Activated naive CD4-positive, alpha-beta T cell treated with anti-CD3 and anti-CD28 coated beads for 36 hours (primary cell): ENCODE measurements at regions of chr10 and their contacts with region 1.

Region 1: GRCh38 chr10:92699518-92700381 is 10.0 kb downstream of the HHEX start:
- DNase-seq: peak; percentile 62
- H3K4me3 Mint-ChIP-seq: peak overlapping the region; percentile 78
- H3K27ac Mint-ChIP-seq: no peak overlapping the region
- H3K4me1 Mint-ChIP-seq: peaks cover 16% of the 10 kb centered on the region
- H3K27me3 Mint-ChIP-seq: peaks cover 64% of the 10 kb centered on the region

Region 2: DNA sequence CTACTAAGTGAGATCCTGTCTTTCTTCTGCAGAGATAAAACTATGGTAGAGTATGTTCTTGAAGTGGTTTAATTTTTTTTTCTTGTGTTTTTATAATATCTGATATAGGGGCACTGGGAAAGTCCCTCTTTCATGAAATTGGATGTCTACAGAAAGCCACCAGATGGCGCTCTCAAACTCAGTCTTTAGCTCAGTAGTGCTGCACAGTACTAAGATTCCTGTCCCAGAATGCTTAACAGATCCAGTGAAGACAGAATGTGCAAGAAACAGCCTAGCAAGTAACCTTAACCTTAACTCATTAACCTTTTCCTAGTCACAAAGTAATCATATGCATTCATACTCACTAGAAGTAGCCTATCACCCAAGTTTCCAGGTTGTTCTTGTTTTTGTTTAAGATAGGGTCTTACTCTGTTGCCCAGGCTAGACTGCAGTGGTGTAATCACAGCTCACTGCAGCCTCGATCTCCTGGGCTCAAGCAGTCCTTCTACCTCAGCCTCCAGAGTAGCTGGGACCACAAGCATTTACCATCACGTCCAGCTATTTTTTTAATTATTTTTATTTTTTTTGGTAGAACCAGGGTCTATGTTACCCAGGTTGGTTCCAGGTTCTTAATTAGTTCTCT is 182.6 kb before region 1 on chr10:
- CTCF ChIA-PET with region 1: no interaction called
- intact Hi-C with region 1: loop called (anchors 1 kb)
- DNase-seq: peak; percentile 78
- H3K4me3 Mint-ChIP-seq: no peak overlapping the region
- H3K27ac Mint-ChIP-seq: no peak overlapping the region
- H3K4me1 Mint-ChIP-seq: peaks cover 6% of the 10 kb centered on the region
- H3K27me3 Mint-ChIP-seq: no peaks in the 10 kb centered on the region

Region 3: GRCh38 chr10:92667078-92667477 is 32.7 kb before region 1 on chr10:
- CTCF ChIA-PET with region 1: no interaction called
- intact Hi-C with region 1: no loop called
- DNase-seq: no peak
- H3K4me3 Mint-ChIP-seq: no peak overlapping the region
- H3K27ac Mint-ChIP-seq: no peak overlapping the region
- H3K4me1 Mint-ChIP-seq: no peaks in the 10 kb centered on the region
- H3K27me3 Mint-ChIP-seq: no peaks in the 10 kb centered on the region

Region 4: DNA sequence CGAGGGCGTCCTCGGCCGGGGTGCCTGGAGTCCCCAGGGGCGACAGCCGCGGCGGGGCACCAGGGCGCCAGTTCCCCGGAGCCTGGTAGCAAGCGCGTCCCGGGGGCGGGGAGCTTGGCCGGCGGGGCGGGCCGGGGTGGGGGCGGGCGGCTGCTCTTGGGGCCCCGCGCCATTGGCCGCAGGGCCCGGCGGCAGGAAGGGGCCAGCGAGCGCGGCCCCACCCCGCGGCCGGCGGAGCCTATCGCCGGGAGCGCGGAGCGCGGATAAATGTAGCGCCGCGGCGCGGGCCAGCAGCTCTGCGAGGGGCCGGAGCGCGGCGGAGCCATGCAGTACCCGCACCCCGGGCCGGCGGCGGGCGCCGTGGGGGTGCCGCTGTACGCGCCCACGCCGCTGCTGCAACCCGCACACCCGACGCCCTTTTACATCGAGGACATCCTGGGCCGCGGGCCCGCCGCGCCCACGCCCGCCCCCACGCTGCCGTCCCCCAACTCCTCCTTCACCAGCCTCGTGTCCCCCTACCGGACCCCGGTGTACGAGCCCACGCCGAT is 10.0 kb before region 1 on chr10 and contains the start of gene HHEX:
- CTCF ChIA-PET with region 1: interaction called, 5 read pairs
- intact Hi-C with region 1: loop called (anchors 1 kb)
- DNase-seq: no peak
- H3K4me3 Mint-ChIP-seq: peak within 1 kb of the TSS; percentile 58
- H3K27ac Mint-ChIP-seq: no peak within 1 kb of the TSS
- H3K4me1 Mint-ChIP-seq: peaks cover 19% of the 10 kb centered on the region
- H3K27me3 Mint-ChIP-seq: peaks cover 64% of the 10 kb centered on the region
- total RNA-seq, gene HHEX: 0.15 TPM in 1 of 2 experiments, not detected in the other